CD8-positive, alpha-beta T cell (primary cell): ENCODE measurements at regions of chr2 and their contacts with region 1.

Region 1: GRCh38 chr2:20051532-20052228 is at the start of gene LAPTM4A:
- DNase-seq: peak; percentile 95 to 100 (median 97)
- ATAC-seq: peak; percentile 88
- H3K4me3 ChIP-seq: peak within 1 kb of the TSS; percentile 82 to 90
- H3K4me3 Mint-ChIP-seq: no peak within 1 kb of the TSS
- H3K27ac ChIP-seq: peak within 1 kb of the TSS; percentile 99
- H3K27ac Mint-ChIP-seq: no peak within 1 kb of the TSS
- H3K4me1 ChIP-seq: peaks cover 28% of the 10 kb centered on the region
- H3K4me1 Mint-ChIP-seq: peaks cover 31% of the 10 kb centered on the region
- H3K27me3 ChIP-seq: no peaks in the 10 kb centered on the region
- H3K27me3 Mint-ChIP-seq: peaks cover 19% of the 10 kb centered on the region
- CTCF ChIP-seq: no peak
- total RNA-seq, gene LAPTM4A: 92.4 to 98.8 TPM

Region 2: DNA sequence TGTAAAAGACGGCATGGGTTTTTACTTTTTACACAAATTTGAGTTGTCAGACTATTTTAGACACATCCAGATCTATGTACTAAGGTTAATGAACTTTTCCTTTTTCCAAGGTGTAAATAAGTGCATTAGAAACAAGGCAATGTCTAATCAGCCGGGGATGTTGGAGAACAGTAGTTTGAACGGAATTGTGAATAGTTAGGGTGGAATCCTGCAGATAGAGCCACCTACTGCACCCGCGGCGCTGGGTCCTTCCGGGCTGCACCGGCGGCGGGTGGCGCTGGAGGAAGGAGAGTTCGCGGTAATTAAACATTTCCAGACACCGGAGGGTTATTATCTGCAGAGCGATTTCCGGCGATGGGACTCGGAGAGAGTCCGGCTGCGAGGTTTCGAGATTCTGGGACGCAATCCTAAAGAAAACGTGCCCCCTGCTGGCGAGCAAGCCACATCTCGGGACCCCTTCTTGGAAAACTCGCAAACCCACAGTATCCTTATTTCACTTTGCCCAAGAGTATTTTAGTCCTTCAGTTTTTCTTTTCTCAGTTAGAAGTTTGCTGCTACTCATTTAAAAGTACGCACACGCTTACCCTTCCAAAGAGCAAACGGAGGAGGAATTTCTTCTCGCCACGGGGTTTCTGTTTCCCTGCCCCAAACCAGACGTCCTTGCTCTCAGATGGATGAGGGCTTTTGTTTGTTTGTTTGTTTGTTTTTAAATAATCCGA is 688.8 kb before region 1 on chr2:
- CTCF ChIA-PET with region 1: no interaction called
- POLR2A ChIA-PET with region 1: no interaction called
- intact Hi-C with region 1: loop called in 1 of 2 experiments (anchors 5 kb)
- DNase-seq: peak in 6 of 9 experiments; percentile 29 to 74 (median 52)
- ATAC-seq: peak; percentile 48
- H3K4me3 ChIP-seq: peak overlapping the region; percentile 67 to 70
- H3K4me3 Mint-ChIP-seq: peak overlapping the region; percentile 93
- H3K27ac ChIP-seq: no peak overlapping the region
- H3K27ac Mint-ChIP-seq: peak overlapping the region; percentile 68
- H3K4me1 ChIP-seq: peaks cover 36% of the 10 kb centered on the region
- H3K4me1 Mint-ChIP-seq: peaks cover 37% of the 10 kb centered on the region
- H3K27me3 ChIP-seq: peaks cover 28 to 33% of the 10 kb centered on the region in 2 experiments
- H3K27me3 Mint-ChIP-seq: peaks cover 33% of the 10 kb centered on the region
- CTCF ChIP-seq: peak; percentile 38

Region 3: GRCh38 chr2:19901442-19902215 is 150.1 kb before region 1 on chr2 and contains the start of gene TTC32:
- CTCF ChIA-PET with region 1: no interaction called
- POLR2A ChIA-PET with region 1: interaction called, 6 read pairs
- intact Hi-C with region 1: loop called (anchors 1 to 2 kb)
- DNase-seq: peak; percentile 87 to 96 (median 93)
- ATAC-seq: peak; percentile 86
- H3K4me3 ChIP-seq: peak within 1 kb of the TSS; percentile 83
- H3K4me3 Mint-ChIP-seq: peak within 1 kb of the TSS; percentile 91
- H3K27ac ChIP-seq: peak within 1 kb of the TSS; percentile 89 to 94
- H3K27ac Mint-ChIP-seq: peak within 1 kb of the TSS; percentile 96
- H3K4me1 ChIP-seq: peaks cover 33% of the 10 kb centered on the region
- H3K4me1 Mint-ChIP-seq: peaks cover 30% of the 10 kb centered on the region
- H3K27me3 ChIP-seq: peaks cover 0 to 3% of the 10 kb centered on the region in 2 experiments
- H3K27me3 Mint-ChIP-seq: peaks cover 4% of the 10 kb centered on the region
- CTCF ChIP-seq: no peak
- total RNA-seq, gene TTC32: 33.7 to 35.8 TPM

Region 4: DNA sequence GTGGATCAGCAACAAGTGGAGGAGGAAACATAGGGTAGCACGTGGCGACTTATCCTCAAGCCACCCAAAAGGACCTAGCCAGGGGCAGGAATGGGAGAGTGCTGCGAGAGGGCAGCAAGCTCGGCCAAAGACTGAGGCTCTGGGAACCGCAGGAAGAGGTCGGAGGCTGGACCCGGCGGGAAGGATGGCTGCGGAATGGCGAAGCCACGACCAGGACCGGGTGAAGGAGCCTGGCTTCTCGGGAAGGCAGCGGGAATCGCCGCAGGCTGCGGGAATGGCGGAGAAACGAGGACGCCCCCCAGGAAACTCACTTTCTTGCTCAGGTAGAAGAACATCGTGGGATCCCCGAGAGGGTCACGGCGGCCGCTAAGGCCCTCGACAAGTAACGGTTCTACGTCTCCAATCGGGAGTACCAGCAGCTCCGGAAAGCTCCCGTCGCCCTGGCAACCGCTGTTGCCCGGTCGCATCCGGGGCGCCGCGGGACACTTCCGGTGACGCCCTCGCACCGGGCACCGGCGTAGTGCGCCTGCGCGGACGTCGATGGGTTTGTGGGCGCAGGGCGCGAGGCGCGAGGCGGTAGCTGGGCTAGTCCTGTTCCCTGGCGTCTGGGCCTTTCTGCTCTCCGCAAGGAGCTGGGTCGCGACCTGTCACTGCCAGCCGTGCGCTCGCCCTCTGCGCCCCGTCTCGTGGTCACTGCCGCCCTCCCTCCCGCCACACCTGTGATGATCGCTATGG is 61.8 kb before region 1 on chr2 and contains the start of gene WDR35:
- CTCF ChIA-PET with region 1: no interaction called
- POLR2A ChIA-PET with region 1: interaction called, 3 read pairs
- intact Hi-C with region 1: loop called (anchors 1 to 2 kb)
- DNase-seq: peak; percentile 80 to 96 (median 92)
- ATAC-seq: peak; percentile 94
- H3K4me3 ChIP-seq: peak within 1 kb of the TSS; percentile 84 to 96
- H3K4me3 Mint-ChIP-seq: peak within 1 kb of the TSS; percentile 90
- H3K27ac ChIP-seq: peak within 1 kb of the TSS; percentile 68 to 74
- H3K27ac Mint-ChIP-seq: peak within 1 kb of the TSS; percentile 86
- H3K4me1 ChIP-seq: peaks cover 10% of the 10 kb centered on the region
- H3K4me1 Mint-ChIP-seq: peaks cover 28% of the 10 kb centered on the region
- H3K27me3 ChIP-seq: peaks cover 0 to 3% of the 10 kb centered on the region in 2 experiments
- H3K27me3 Mint-ChIP-seq: peaks cover 14% of the 10 kb centered on the region
- CTCF ChIP-seq: no peak
- total RNA-seq, gene WDR35: 2.4 to 2.9 TPM

Region 5: DNA sequence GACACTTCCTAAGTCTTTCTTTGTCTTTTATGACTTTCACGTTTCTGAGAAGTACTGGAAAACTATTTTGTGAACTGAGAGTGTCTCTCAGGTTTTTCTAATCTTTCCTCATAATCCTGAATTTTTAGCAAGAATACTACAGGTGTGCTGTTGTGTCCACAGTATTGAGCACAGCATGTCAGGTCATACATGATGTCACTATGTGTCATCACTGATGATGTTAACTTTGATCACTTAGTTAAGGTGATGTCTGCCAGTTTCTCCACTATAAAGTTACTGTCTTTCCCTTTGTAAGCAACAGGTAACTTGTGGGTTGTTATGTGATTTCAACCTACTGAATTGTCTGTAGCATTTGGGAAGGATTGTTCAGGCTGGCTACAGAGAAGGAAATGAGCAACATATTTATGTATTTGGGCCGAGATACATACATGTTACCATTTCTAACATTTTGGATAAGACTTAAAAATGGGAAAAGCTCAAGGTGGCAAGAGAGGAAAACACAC is 50.3 kb before region 1 on chr2:
- CTCF ChIA-PET with region 1: no interaction called
- POLR2A ChIA-PET with region 1: no interaction called
- intact Hi-C with region 1: no loop called
- DNase-seq: no peak
- ATAC-seq: no peak
- H3K4me3 ChIP-seq: no peak overlapping the region
- H3K4me3 Mint-ChIP-seq: no peak overlapping the region
- H3K27ac ChIP-seq: no peak overlapping the region
- H3K27ac Mint-ChIP-seq: no peak overlapping the region
- H3K4me1 ChIP-seq: no peaks in the 10 kb centered on the region
- H3K4me1 Mint-ChIP-seq: no peaks in the 10 kb centered on the region
- H3K27me3 ChIP-seq: peaks cover 0 to 3% of the 10 kb centered on the region in 2 experiments
- H3K27me3 Mint-ChIP-seq: peaks cover 21% of the 10 kb centered on the region
- CTCF ChIP-seq: no peak

Region 6: GRCh38 chr2:20015472-20016083 is 36.1 kb before region 1 on chr2:
- CTCF ChIA-PET with region 1: interaction called, 8 read pairs
- POLR2A ChIA-PET with region 1: no interaction called
- intact Hi-C with region 1: loop called in 1 of 2 experiments (anchors 2 kb)
- DNase-seq: peak in 2 of 9 experiments; percentile 45 to 65
- ATAC-seq: peak; percentile 61
- H3K4me3 ChIP-seq: no peak overlapping the region
- H3K4me3 Mint-ChIP-seq: no peak overlapping the region
- H3K27ac ChIP-seq: no peak overlapping the region
- H3K27ac Mint-ChIP-seq: no peak overlapping the region
- H3K4me1 ChIP-seq: peaks cover 8% of the 10 kb centered on the region
- H3K4me1 Mint-ChIP-seq: peaks cover 12% of the 10 kb centered on the region
- H3K27me3 ChIP-seq: peaks cover 2 to 9% of the 10 kb centered on the region in 2 experiments
- H3K27me3 Mint-ChIP-seq: peaks cover 28% of the 10 kb centered on the region
- CTCF ChIP-seq: peak; percentile 58

Region 7: DNA sequence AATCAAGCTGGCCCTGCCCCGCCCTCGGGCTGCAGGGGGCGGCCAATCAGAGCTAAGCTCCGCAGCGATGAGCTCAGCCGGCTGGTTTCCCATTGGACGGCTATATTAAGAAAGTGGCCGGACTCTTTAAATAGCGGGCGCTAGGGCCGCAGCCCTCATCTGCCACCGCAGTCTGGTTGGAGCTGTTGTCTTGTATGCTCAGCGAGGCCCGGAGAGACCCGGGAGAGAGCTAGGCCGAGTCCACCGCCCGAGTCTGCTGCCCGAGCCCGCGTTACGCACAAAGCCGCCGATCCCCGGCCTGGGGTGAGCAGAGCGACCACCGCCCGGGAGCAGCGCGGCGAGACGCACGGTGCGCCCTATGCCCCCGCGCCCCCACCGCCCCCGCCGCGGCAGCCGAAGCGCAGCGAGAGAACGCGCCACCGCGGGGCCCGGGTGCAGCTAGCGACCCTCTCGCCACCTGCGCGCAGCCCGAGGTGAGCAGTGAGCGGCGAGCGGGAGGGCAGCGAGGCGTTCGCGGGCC is 395.3 kb after region 1 on chr2 and contains the start of gene RHOB:
- CTCF ChIA-PET with region 1: no interaction called
- POLR2A ChIA-PET with region 1: interaction called, 3 read pairs
- intact Hi-C with region 1: loop called in 1 of 2 experiments (anchors 10 kb)
- DNase-seq: peak; percentile 77 to 97 (median 86)
- ATAC-seq: peak; percentile 96
- H3K4me3 ChIP-seq: peak within 1 kb of the TSS; percentile 71 to 77
- H3K4me3 Mint-ChIP-seq: peak within 1 kb of the TSS; percentile 85
- H3K27ac ChIP-seq: peak within 1 kb of the TSS; percentile 66 to 78
- H3K27ac Mint-ChIP-seq: peak within 1 kb of the TSS; percentile 57
- H3K4me1 ChIP-seq: peaks cover 17% of the 10 kb centered on the region
- H3K4me1 Mint-ChIP-seq: peaks cover 13% of the 10 kb centered on the region
- H3K27me3 ChIP-seq: peaks cover 0 to 7% of the 10 kb centered on the region in 2 experiments
- H3K27me3 Mint-ChIP-seq: peaks cover 10% of the 10 kb centered on the region
- CTCF ChIP-seq: no peak
- total RNA-seq, gene RHOB: 24.0 to 24.7 TPM

Region 8: GRCh38 chr2:20642055-20642971 is 590.6 kb after region 1 on chr2:
- CTCF ChIA-PET with region 1: no interaction called
- POLR2A ChIA-PET with region 1: no interaction called
- intact Hi-C with region 1: no loop called
- DNase-seq: peak; percentile 52 to 83 (median 71)
- ATAC-seq: peak; percentile 100
- H3K4me3 ChIP-seq: no peak overlapping the region
- H3K4me3 Mint-ChIP-seq: no peak overlapping the region
- H3K27ac ChIP-seq: no peak overlapping the region
- H3K27ac Mint-ChIP-seq: no peak overlapping the region
- H3K4me1 ChIP-seq: peaks cover 4% of the 10 kb centered on the region
- H3K4me1 Mint-ChIP-seq: peaks cover 4% of the 10 kb centered on the region
- H3K27me3 ChIP-seq: no peaks in the 10 kb centered on the region
- H3K27me3 Mint-ChIP-seq: no peaks in the 10 kb centered on the region
- CTCF ChIP-seq: peak; percentile 69

Region 9: GRCh38 chr2:20822535-20823490 is 771.1 kb after region 1 on chr2 and contains the start of gene LDAH:
- CTCF ChIA-PET with region 1: no interaction called
- POLR2A ChIA-PET with region 1: no interaction called
- intact Hi-C with region 1: loop called (anchors 5 kb)
- DNase-seq: peak; percentile 67 to 92 (median 86)
- ATAC-seq: peak; percentile 84
- H3K4me3 ChIP-seq: peak within 1 kb of the TSS; percentile 79 to 86
- H3K4me3 Mint-ChIP-seq: peak within 1 kb of the TSS; percentile 97
- H3K27ac ChIP-seq: peak within 1 kb of the TSS; percentile 89 to 94
- H3K27ac Mint-ChIP-seq: peak within 1 kb of the TSS; percentile 99
- H3K4me1 ChIP-seq: no peaks in the 10 kb centered on the region
- H3K4me1 Mint-ChIP-seq: peaks cover 28% of the 10 kb centered on the region
- H3K27me3 ChIP-seq: no peaks in the 10 kb centered on the region
- H3K27me3 Mint-ChIP-seq: no peaks in the 10 kb centered on the region
- CTCF ChIP-seq: no peak
- total RNA-seq, gene LDAH: 3.0 to 4.6 TPM